GM12878 (cell line): ENCODE measurements at regions of chr17 and their contacts with region 1.

Region 1: GRCh38 chr17:7687908-7688807 is at the start of gene WRAP53:
- DNase-seq: peak; percentile 85
- ATAC-seq: peak; percentile 90
- H3K4me3 ChIP-seq: peak within 1 kb of the TSS; percentile 92
- H3K27ac ChIP-seq: peak within 1 kb of the TSS; percentile 100
- H3K4me1 ChIP-seq: peaks cover 12% of the 10 kb centered on the region
- H3K27me3 ChIP-seq: no peaks in the 10 kb centered on the region
- CTCF ChIP-seq: peak; percentile 97 to 99 (median 99)
- EP300 ChIP-seq: peak in 1 of 2 experiments; percentile 22; a peak in 1 of 4 replicates
- POLR2A ChIP-seq: peak; percentile 61
- RAD21 ChIP-seq: peak; percentile 78
- polyA plus RNA-seq, gene WRAP53: 1.9 to 5.3 TPM

Region 2: GRCh38 chr17:7351665-7352501 is 336.3 kb before region 1 on chr17 and contains the start of gene KCTD11:
- CTCF ChIA-PET with region 1: interaction called, 21 read pairs
- POLR2A ChIA-PET with region 1: interaction called, 4 read pairs
- RAD21 ChIA-PET with region 1: interaction called, 10 read pairs
- SMC1A ChIA-PET with region 1: interaction called, 8 read pairs
- in situ Hi-C with region 1: no loop called
- intact Hi-C with region 1: no loop called
- DNase-seq: no peak
- ATAC-seq: peak; percentile 81
- H3K4me3 ChIP-seq: peak within 1 kb of the TSS; percentile 88
- H3K27ac ChIP-seq: peak within 1 kb of the TSS; percentile 59
- H3K4me1 ChIP-seq: peaks cover 23% of the 10 kb centered on the region
- H3K27me3 ChIP-seq: no peaks in the 10 kb centered on the region
- CTCF ChIP-seq: peak in 2 of 3 experiments; percentile 55 to 59; a peak in 3 of 6 replicates
- EP300 ChIP-seq: no peak
- POLR2A ChIP-seq: peak; percentile 81
- RAD21 ChIP-seq: 0 out of 2 replicates have a peak, but pooled peaks have one; percentile 27
- polyA plus RNA-seq, gene KCTD11: 0.05 to 0.09 TPM

Region 3: DNA sequence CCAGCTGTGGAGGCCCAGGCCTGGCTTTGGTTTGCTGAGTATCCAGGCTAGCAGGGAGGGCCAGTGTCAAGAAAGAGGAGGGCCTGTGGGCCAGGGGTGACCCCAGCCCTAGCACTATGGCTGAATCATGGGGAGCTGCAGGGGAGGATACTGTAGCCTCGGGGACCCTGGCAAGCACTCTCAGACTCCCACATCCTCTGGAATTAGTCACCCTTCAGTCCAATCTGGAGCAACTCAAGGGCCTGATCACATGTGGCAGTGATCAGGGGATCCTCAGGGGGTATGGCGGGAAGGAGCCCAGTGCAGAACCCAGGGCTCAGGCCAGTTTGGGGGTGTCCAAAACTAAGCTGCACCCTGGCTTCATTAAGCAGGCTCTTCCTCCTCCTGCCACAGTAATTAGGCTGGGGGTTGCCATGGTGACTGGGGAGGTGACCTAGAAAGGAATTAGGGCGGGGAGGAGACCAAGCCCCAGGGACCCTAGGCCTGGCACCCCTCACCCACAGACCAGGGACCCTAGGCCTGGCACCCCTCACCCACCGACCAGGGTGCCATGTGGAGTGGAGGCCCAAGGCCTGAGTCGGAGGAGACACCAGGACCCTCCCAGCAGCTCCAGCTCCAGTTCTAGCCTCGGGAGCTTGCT is 274.7 kb before region 1 on chr17:
- CTCF ChIA-PET with region 1: no interaction called
- POLR2A ChIA-PET with region 1: no interaction called
- RAD21 ChIA-PET with region 1: no interaction called
- SMC1A ChIA-PET with region 1: no interaction called
- in situ Hi-C with region 1: no loop called
- intact Hi-C with region 1: no loop called
- DNase-seq: no peak
- ATAC-seq: no peak
- H3K4me3 ChIP-seq: no peak overlapping the region
- H3K27ac ChIP-seq: no peak overlapping the region
- H3K4me1 ChIP-seq: no peaks in the 10 kb centered on the region
- H3K27me3 ChIP-seq: no peaks in the 10 kb centered on the region; a peak in 2 of 4 replicates
- CTCF ChIP-seq: no peak
- EP300 ChIP-seq: no peak
- POLR2A ChIP-seq: no peak
- RAD21 ChIP-seq: no peak

Region 4: GRCh38 chr17:7484067-7484918 is 203.9 kb before region 1 on chr17 and contains the start of gene POLR2A:
- CTCF ChIA-PET with region 1: interaction called, 6 read pairs
- POLR2A ChIA-PET with region 1: interaction called, 4 read pairs
- RAD21 ChIA-PET with region 1: interaction called, 3 read pairs
- SMC1A ChIA-PET with region 1: no interaction called
- in situ Hi-C with region 1: no loop called
- intact Hi-C with region 1: loop called (anchors 10 kb)
- DNase-seq: peak; percentile 95
- ATAC-seq: peak; percentile 76
- H3K4me3 ChIP-seq: peak within 1 kb of the TSS; percentile 99
- H3K27ac ChIP-seq: peak within 1 kb of the TSS; percentile 100
- H3K4me1 ChIP-seq: no peaks in the 10 kb centered on the region; the same call in 1 of the 2 replicates
- H3K27me3 ChIP-seq: no peaks in the 10 kb centered on the region
- CTCF ChIP-seq: no peak
- EP300 ChIP-seq: peak in 1 of 2 experiments; percentile 63; a peak in 3 of 4 replicates
- POLR2A ChIP-seq: peak; percentile 98
- RAD21 ChIP-seq: no peak
- polyA plus RNA-seq, gene POLR2A: 1.7 to 2.8 TPM

Region 5: DNA sequence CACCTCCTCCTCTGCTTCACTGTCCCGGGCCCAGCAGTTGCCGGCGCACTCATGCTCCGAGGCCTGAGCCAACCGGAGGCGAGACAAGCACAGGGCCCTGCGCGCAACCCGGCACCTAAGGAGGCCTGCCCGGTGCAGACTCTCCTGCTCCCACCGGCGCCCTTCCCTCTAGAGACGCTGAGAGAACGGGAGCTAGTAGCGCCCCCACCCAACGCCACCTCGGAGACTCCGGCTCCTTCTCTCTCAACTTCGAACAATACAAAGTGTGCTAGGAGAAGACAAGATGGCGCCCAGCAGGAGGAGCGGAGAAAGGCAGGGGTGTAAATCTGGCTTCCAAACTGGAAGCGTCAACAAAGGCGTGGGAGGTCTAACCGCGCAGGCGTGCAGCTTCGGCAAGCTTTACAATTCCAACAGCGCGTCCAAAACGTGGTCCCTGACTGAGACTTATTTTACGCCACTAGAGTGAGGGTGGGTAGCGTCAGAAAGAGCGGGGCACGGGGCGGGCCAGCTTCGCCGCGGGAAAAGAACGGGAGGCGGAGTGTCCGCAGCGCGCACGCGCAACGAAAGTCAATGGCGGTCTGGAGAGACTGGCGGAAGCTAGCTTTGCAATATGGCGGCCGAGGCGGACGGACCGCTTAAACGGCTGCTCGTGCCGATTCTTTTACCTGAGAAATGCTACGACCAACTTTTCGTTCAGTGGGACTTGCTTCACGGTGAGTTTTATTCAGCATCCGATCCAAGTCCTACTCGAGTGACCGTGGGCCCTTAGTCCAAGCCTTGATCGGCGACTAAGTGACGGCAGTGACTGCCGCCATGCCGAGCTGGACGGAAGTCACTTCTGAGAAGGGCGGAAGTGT is 104.7 kb before region 1 on chr17 and contains the start of gene MPDU1:
- CTCF ChIA-PET with region 1: interaction called, 46 read pairs
- POLR2A ChIA-PET with region 1: interaction called, 31 read pairs
- RAD21 ChIA-PET with region 1: interaction called, 43 read pairs
- SMC1A ChIA-PET with region 1: interaction called, 42 read pairs
- in situ Hi-C with region 1: no loop called
- intact Hi-C with region 1: no loop called
- DNase-seq: peak; percentile 84
- ATAC-seq: peak; percentile 77
- H3K4me3 ChIP-seq: peak within 1 kb of the TSS; percentile 75
- H3K27ac ChIP-seq: peak within 1 kb of the TSS; percentile 99
- H3K4me1 ChIP-seq: peaks cover 38% of the 10 kb centered on the region
- H3K27me3 ChIP-seq: no peaks in the 10 kb centered on the region
- CTCF ChIP-seq: no peak
- EP300 ChIP-seq: no peak
- POLR2A ChIP-seq: peak; percentile 96
- RAD21 ChIP-seq: no peak
- polyA plus RNA-seq, gene MPDU1: 3.6 to 11.6 TPM

Region 6: DNA sequence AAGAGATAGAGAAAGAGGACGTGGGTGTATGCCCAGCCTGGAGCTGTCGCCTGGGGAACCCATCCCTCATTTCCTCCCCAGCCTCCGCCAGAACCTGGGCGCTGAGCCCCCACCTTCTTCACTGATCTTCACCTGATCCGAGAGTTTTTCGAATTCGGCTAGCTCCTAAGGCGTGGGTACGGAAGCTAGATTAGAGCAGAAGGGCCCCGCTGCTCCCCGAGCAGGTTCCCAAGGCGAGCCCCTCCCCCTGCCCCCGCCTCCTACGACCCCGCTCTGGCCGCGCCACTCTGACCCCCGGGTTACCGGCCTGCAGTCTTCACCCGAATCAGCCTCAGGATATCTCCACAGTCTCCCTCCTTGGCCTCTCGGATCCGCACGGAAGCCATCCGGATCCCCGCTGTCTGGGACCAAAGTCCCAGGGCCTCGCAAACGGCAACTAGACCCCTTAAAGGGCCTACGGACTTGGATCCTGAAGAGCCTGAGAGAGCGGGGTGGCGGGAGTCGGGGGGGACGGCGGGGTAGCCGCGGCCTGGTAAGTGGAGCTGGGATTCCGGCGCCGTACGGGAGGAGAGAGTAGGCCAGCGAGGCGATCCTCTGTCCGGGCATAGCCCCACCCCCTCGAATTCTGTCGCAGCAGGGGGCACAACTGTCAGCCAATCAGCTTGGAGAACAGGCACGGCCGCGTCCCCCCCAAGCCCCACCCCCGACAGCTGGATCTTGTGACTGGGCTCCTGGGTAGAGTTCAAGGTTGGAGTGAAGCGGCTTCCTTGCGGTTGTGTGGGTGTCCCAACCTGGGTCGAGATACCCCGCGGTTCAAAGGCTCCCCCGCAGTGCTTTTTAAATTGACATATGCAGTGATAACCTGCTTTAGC is 60.7 kb before region 1 on chr17 and contains the start of gene SAT2:
- CTCF ChIA-PET with region 1: interaction called, 128 read pairs
- POLR2A ChIA-PET with region 1: interaction called, 33 read pairs
- RAD21 ChIA-PET with region 1: interaction called, 30 read pairs
- SMC1A ChIA-PET with region 1: interaction called, 20 read pairs
- in situ Hi-C with region 1: no loop called
- intact Hi-C with region 1: no loop called
- DNase-seq: peak; percentile 67
- ATAC-seq: peak; percentile 98
- H3K4me3 ChIP-seq: peak within 1 kb of the TSS; percentile 100
- H3K27ac ChIP-seq: peak within 1 kb of the TSS; percentile 69
- H3K4me1 ChIP-seq: peaks cover 3% of the 10 kb centered on the region
- H3K27me3 ChIP-seq: no peaks in the 10 kb centered on the region
- CTCF ChIP-seq: no peak
- EP300 ChIP-seq: no peak
- POLR2A ChIP-seq: peak; percentile 88
- RAD21 ChIP-seq: no peak
- polyA plus RNA-seq, gene SAT2: 14.6 to 31.5 TPM

Region 7: DNA sequence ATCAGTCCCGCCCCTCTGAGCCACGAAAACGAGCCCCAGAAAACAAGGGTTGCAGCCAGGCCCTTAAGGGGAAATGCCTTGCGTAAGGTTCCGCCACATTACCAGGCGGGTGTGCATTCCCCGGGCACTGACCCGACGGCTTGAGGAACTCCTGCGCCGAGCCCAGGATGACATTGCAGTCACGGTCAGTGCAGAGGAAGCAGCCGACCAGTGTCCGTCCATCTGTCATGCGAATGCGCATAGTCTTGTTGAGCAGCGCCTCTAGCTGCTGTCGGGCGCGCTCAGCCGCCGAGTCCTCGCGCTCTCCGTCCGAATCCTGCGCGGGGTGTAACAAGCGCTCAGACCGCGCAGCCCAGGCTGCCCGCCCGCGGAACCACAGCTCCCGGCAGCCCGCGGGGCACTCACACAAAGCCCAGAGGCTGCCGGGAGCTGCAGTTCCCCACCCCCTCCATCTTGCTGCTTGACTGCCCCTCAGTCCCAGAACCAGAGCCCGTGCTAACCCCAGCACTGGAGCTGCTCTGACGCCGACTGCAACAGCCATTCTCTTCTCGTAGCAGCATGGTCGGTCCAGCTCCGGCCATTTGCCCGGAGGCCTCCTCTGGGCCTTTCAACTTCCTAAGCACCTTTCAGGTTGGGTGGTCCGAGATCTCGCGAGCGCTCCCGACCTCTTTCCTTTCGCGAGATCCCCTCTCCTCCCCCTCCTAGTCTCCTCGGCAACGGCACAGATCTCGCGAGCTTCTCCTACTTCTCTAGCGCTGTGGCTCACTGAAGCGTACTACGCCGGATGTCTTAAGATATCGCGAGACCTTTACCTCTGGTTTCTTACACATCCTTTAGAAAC is 168.9 kb after region 1 on chr17 and contains the start of gene NAA38:
- CTCF ChIA-PET with region 1: interaction called, 8 read pairs
- POLR2A ChIA-PET with region 1: interaction called, 3 read pairs
- RAD21 ChIA-PET with region 1: interaction called, 5 read pairs
- SMC1A ChIA-PET with region 1: no interaction called
- in situ Hi-C with region 1: no loop called
- intact Hi-C with region 1: loop called (anchors 5 kb)
- DNase-seq: peak; percentile 100
- ATAC-seq: peak; percentile 91
- H3K4me3 ChIP-seq: peak within 1 kb of the TSS; percentile 96
- H3K27ac ChIP-seq: peak within 1 kb of the TSS; percentile 96
- H3K4me1 ChIP-seq: peaks cover 18% of the 10 kb centered on the region
- H3K27me3 ChIP-seq: no peaks in the 10 kb centered on the region
- CTCF ChIP-seq: peak in 2 of 3 experiments; percentile 48 to 69; a peak in 5 of 6 replicates
- EP300 ChIP-seq: no peak; a peak in 1 of 4 replicates
- POLR2A ChIP-seq: peak; percentile 76
- RAD21 ChIP-seq: no peak
- polyA plus RNA-seq, gene NAA38: 206 to 231 TPM